ENCODE measurements at regions of chr1 and their contacts with region 1.

Region 1: DNA sequence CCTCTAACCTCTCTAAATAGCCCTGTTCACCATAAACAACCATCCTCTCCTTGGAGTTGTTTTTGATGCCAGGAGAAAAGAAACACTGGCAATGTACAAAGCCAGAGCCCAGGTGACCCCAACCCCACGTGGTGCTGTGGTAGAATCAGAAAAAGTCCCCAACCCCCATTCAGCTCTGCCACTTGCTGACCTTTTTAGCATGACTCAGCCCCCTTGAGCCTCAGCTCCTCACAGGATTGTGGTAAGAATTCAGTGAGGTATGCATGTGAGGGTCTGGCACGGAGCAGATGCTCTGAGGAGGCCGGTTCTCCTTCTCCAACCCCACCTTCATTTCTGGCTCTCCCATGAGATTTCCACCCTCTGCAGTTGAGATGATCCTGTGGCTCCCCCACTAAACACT is 11.1 kb upstream of the CHI3L1 start:
- DNase-seq: no peak
- H3K4me3 ChIP-seq: no peak overlapping the region
- CTCF ChIP-seq: no peak
- POLR2A ChIP-seq: no peak

Region 2: GRCh38 chr1:202760589-202760988 is 437.0 kb before region 1 on chr1:
- intact Hi-C with region 1: no loop called
- DNase-seq: no peak
- H3K4me3 ChIP-seq: no peak overlapping the region
- CTCF ChIP-seq: no peak
- POLR2A ChIP-seq: no peak

Region 3: DNA sequence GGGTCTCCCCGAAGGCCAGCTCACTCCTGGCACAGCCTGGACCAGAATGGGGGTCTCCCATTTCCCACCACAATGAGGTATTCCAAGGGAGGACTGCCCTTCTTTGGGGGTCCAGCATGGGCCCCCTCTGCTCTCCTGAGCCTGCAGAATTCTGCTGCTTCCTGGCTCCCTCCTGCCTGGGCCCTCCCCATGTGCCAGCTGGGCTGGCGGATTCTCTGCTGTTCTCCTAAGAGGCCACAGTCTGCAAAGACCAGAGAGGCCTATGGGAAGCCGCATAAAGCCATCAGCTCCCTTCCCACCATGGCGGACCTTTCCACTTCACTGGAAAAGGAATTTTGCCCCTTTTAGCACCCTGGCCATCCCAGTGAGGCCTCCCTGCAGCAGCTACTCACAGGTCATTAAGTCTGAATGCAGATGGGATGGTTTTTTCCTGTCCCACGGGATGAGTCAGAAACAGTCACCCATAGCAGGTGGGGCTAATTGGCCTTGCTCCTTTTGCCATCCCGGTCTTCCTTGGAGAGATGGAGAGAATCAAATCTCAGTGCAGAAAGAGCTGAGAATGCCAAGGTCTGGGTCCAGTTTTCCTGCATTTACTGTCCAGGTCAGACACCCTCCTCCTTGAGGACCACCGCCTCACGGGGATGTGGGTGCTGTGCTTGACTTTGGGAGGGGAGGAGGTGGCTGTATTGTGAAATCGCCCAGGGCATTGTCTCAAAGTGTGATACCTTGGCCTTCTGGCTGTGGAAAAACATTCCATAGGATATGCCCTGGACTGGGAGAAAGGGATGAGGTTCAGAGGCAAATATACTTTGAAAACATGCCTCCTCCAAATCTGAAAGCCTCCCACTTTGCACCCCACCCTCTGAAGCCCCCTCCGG is 45.2 kb before region 1 on chr1:
- intact Hi-C with region 1: loop called (anchors 1 kb)
- DNase-seq: no peak
- H3K4me3 ChIP-seq: no peak overlapping the region
- CTCF ChIP-seq: no peak
- POLR2A ChIP-seq: no peak